PC-3 (cell line): ENCODE measurements at regions of chr1 and their contacts with region 1.

Region 1: GRCh38 chr1:220733090-220733601 is 15.0 kb upstream of the MTARC2 start:
- DNase-seq: peak; percentile 94
- ATAC-seq: peak; percentile 52
- H3K4me3 ChIP-seq: peak overlapping the region; percentile 56
- H3K27ac ChIP-seq: 0 out of 2 replicates have a peak overlapping the region, but pooled peaks have one; percentile 43
- H3K4me1 ChIP-seq: peaks cover 25% of the 10 kb centered on the region
- H3K27me3 ChIP-seq: no peaks in the 10 kb centered on the region
- CTCF ChIP-seq: peak; percentile 94

Region 2: GRCh38 chr1:220189750-220190347 is 543.3 kb before region 1 on chr1:
- CTCF ChIA-PET with region 1: interaction called, 4 read pairs
- POLR2A ChIA-PET with region 1: no interaction called
- intact Hi-C with region 1: loop called (anchors 5 kb)
- DNase-seq: peak; percentile 58
- ATAC-seq: peak; percentile 48
- H3K4me3 ChIP-seq: no peak overlapping the region
- H3K27ac ChIP-seq: no peak overlapping the region
- H3K4me1 ChIP-seq: no peaks in the 10 kb centered on the region
- H3K27me3 ChIP-seq: no peaks in the 10 kb centered on the region
- CTCF ChIP-seq: peak; percentile 77

Region 3: GRCh38 chr1:220281159-220281574 is 452.0 kb before region 1 on chr1:
- CTCF ChIA-PET with region 1: interaction called, 15 read pairs
- POLR2A ChIA-PET with region 1: no interaction called
- intact Hi-C with region 1: loop called (anchors 1 kb)
- DNase-seq: peak; percentile 84
- ATAC-seq: peak; percentile 85
- H3K4me3 ChIP-seq: no peak overlapping the region
- H3K27ac ChIP-seq: no peak overlapping the region
- H3K4me1 ChIP-seq: 0 out of 2 replicates have a peak, but pooled peaks cover 4% of the 10 kb centered on the region
- H3K27me3 ChIP-seq: peaks cover 53% of the 10 kb centered on the region
- CTCF ChIP-seq: peak; percentile 94

Region 4: GRCh38 chr1:220680085-220680687 is 53.0 kb before region 1 on chr1:
- CTCF ChIA-PET with region 1: interaction called, 16 read pairs
- POLR2A ChIA-PET with region 1: no interaction called
- intact Hi-C with region 1: loop called (anchors 1 kb)
- DNase-seq: peak; percentile 73
- ATAC-seq: peak; percentile 82
- H3K4me3 ChIP-seq: no peak overlapping the region
- H3K27ac ChIP-seq: no peak overlapping the region
- H3K4me1 ChIP-seq: peaks cover 13% of the 10 kb centered on the region
- H3K27me3 ChIP-seq: no peaks in the 10 kb centered on the region
- CTCF ChIP-seq: peak; percentile 81

Region 5: DNA sequence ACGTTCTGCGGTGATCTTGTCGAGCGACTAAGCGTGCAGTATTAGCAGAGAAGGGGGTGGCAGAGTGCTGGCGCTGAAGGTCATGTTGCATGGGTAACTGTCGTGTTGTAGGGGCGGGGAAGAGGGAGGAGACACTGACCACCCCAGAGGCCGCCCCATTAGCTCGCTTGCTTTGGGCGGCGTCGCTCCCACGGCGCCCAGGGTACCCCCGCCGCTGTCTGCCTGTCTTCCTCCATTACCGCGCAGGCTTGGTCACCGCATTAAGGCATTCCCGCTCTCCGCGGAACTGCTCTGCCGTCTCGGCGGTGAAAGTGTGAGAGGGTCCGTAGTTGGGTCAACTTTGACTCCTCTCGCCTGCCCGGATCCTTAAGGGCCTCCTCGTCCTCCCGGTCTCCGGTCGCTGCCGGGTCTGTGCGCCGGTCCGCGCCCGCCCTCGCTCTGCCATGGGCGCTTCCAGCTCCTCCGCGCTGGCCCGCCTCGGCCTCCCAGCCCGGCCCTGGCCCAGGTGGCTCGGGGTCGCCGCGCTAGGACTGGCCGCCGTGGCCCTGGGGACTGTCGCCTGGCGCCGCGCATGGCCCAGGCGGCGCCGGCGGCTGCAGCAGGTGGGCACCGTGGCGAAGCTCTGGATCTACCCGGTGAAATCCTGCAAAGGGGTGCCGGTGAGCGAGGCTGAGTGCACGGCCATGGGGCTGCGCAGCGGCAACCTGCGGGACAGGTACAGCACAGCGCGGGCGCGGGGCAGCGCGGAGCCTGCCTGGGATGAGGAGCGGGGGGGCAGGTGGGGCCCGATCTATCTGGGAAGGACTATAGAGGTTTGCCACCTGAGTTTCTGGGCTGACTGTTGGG is 15.2 kb after region 1 on chr1 and contains the start of gene MTARC2:
- CTCF ChIA-PET with region 1: interaction called, 25 read pairs
- POLR2A ChIA-PET with region 1: interaction called, 17 read pairs
- intact Hi-C with region 1: loop called (anchors 1 kb)
- DNase-seq: peak; percentile 85
- ATAC-seq: peak; percentile 93
- H3K4me3 ChIP-seq: peak within 1 kb of the TSS; percentile 88
- H3K27ac ChIP-seq: peak within 1 kb of the TSS; percentile 17
- H3K4me1 ChIP-seq: peaks cover 34% of the 10 kb centered on the region
- H3K27me3 ChIP-seq: no peaks in the 10 kb centered on the region
- CTCF ChIP-seq: no peak
- total RNA-seq, gene MTARC2: 13.3 and 17.7 TPM in 2 replicates

Region 6: DNA sequence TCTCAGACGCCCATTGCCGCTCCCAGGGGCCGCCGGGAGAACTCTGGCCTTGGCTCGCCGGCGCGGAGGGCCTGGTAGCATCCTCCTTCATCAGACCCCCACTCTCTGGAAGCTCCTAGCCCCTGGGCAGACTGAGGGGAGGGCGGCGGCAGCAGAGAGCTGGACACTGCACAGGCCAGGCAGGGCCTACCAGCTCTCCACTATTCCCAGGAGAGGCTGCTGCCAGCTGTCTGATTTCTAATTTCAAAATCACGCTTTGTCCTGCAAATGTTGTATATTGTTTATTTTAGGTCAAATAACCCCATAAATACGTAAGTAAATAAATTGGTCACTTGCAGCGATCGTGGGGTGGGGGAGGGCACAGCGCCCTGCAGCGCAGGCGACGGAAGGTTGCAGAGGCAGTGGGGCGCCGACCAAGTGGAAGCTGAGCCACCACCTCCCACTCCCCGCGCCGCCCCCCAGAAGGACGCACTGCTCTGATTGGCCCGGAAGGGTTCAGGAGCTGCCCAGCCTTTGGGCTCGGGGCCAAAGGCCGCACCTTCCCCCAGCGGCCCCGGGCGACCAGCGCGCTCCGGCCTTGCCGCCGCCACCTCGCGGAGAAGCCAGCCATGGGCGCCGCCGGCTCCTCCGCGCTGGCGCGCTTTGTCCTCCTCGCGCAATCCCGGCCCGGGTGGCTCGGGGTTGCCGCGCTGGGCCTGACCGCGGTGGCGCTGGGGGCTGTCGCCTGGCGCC is 53.4 kb after region 1 on chr1 and contains the start of gene MTARC1:
- CTCF ChIA-PET with region 1: interaction called, 26 read pairs
- POLR2A ChIA-PET with region 1: interaction called, 4 read pairs
- intact Hi-C with region 1: loop called (anchors 1 kb)
- DNase-seq: peak; percentile 91
- ATAC-seq: peak; percentile 79
- H3K4me3 ChIP-seq: peak within 1 kb of the TSS; percentile 65
- H3K27ac ChIP-seq: peak within 1 kb of the TSS; percentile 90
- H3K4me1 ChIP-seq: peaks cover 47% of the 10 kb centered on the region
- H3K27me3 ChIP-seq: no peaks in the 10 kb centered on the region
- CTCF ChIP-seq: 0 out of 2 replicates have a peak, but pooled peaks have one; percentile 26
- total RNA-seq, gene MTARC1: 48.5 and 50.2 TPM in 2 replicates

Region 7: DNA sequence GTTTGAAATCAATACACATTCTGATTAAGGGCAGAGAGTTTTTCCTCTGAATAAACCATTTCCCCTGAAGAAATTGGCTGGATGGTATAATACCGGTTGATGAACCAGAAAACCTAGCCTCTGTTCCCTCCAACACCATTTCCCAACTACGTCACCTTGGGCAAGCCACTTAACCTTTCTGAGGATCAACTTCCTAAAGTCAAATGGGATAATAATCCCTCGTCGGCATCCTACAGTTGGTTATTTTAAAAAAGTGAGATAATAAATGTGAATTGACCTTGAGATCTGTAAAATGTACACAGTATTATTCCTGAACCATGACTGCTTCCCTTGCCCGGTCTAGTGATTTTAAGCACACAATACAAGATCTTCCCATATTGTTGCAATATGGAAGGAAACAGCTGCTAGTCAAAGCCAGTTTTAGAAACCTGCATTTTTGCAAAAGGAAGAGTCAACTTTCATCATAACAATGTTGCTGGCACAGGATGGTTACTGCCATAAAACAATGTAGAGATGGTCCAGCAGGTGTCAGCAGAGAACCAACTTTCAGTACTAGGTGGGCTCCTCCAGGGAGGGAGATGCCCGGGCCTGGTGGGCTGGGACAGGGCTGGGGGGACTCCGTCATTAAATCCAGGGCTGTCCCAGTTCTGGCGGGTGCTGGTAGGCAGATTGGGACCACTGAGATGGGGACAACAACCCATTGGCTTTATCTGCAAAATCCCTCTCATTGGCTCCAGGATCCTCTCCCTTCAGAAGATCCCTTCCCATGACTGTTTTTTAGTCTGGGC is 140.9 kb after region 1 on chr1:
- CTCF ChIA-PET with region 1: no interaction called
- POLR2A ChIA-PET with region 1: no interaction called
- intact Hi-C with region 1: no loop called
- DNase-seq: peak; percentile 72
- ATAC-seq: peak; percentile 40
- H3K4me3 ChIP-seq: no peak overlapping the region
- H3K27ac ChIP-seq: no peak overlapping the region
- H3K4me1 ChIP-seq: peaks cover 8% of the 10 kb centered on the region; the same call in 1 of the 2 replicates
- H3K27me3 ChIP-seq: no peaks in the 10 kb centered on the region
- CTCF ChIP-seq: peak; percentile 97